ENCODE measurements at regions of chr6 and their contacts with region 1.

Region 1: GRCh38 chr6:19851241-19852089 is 14.3 kb downstream of the ID4 start:
- DNase-seq: peak; percentile 87
- ATAC-seq: peak; percentile 98
- H3K4me3 ChIP-seq: peak overlapping the region; percentile 27 to 65 (median 52)
- H3K27ac ChIP-seq: no peak overlapping the region
- H3K4me1 ChIP-seq: peaks cover 23% of the 10 kb centered on the region
- H3K27me3 ChIP-seq: peaks cover 2 to 14% of the 10 kb centered on the region in 2 experiments; a peak in 2 of 5 replicates
- CTCF ChIP-seq: peak; percentile 93
- EP300 ChIP-seq: no peak
- POLR2A ChIP-seq: no peak
- RAD21 ChIP-seq: peak; percentile 91

Region 2: DNA sequence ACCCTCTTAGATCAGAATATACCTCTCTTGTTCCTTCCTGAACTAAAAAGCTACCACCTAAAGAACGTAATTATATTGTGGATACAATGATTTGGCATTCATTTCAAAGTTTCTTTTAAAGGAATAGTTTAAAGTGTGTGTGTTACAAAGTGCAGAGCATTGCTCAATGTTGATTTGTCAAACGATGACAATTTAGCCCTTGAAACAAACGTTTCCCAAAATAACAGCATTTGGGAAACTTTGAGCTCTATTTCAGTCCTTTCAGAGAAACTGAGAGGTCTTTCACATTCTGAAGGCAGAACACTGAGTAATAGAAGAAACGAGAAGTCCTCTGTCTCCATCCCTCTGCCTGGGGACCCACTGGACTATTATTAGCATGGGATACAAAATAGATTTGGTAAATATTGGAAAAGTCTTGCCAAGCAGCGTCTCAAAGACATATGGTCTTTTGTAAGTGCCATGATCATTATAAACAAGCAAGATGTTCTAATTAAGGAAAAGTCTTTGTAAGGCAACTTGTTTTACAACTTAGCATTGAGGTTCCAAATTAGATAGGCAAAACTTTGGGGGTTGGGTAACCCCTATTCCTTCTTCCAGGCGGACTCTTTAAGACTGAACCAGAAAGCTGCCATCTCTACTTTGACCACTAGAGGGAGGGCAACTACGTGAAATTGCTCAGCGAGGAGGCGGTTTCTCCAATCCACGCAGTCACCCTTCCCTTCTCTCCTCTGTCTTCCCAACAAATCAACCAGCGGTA is 1255.5 kb before region 1 on chr6:
- CTCF ChIA-PET with region 1: no interaction called
- POLR2A ChIA-PET with region 1: no interaction called
- in situ Hi-C with region 1: loop called (anchors 25 kb)
- intact Hi-C with region 1: loop called (anchors 5 kb)
- DNase-seq: peak; percentile 43
- ATAC-seq: peak; percentile 96
- H3K4me3 ChIP-seq: no peak overlapping the region
- H3K27ac ChIP-seq: no peak overlapping the region
- H3K4me1 ChIP-seq: 0 out of 2 replicates have a peak, but pooled peaks cover 5% of the 10 kb centered on the region
- H3K27me3 ChIP-seq: no peaks in the 10 kb centered on the region
- CTCF ChIP-seq: peak; percentile 88
- EP300 ChIP-seq: no peak
- POLR2A ChIP-seq: no peak
- RAD21 ChIP-seq: peak; percentile 45; the same call in 1 of the 2 replicates

Region 3: GRCh38 chr6:19210849-19211590 is 640.4 kb before region 1 on chr6:
- CTCF ChIA-PET with region 1: no interaction called
- POLR2A ChIA-PET with region 1: no interaction called
- in situ Hi-C with region 1: no loop called
- intact Hi-C with region 1: loop called (anchors 5 kb)
- DNase-seq: peak; percentile 20
- ATAC-seq: peak; percentile 73
- H3K4me3 ChIP-seq: no peak overlapping the region
- H3K27ac ChIP-seq: no peak overlapping the region
- H3K4me1 ChIP-seq: no peaks in the 10 kb centered on the region
- H3K27me3 ChIP-seq: no peaks in the 10 kb centered on the region
- CTCF ChIP-seq: peak; percentile 36
- EP300 ChIP-seq: no peak
- POLR2A ChIP-seq: no peak
- RAD21 ChIP-seq: no peak

Region 4: DNA sequence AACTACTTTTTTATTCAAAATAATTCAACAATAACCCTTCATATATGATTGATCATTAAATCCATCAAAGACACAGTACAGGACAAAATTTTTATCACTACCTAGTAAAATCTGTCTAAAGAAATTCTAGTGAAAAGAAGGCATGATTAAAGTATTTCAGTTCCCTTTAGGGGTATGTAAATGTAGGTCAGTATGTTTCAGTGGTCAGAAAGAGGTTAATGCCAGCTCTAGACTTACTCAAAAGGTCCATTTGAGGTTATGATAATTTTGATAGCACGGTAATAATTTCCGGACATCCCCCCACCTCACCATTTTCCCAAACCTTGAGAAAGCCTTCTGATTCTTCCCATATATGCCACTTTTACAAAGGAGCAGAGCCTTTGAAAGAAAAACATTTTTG is 207.8 kb before region 1 on chr6:
- CTCF ChIA-PET with region 1: no interaction called
- POLR2A ChIA-PET with region 1: no interaction called
- in situ Hi-C with region 1: no loop called
- intact Hi-C with region 1: loop called (anchors 10 kb)
- DNase-seq: no peak
- ATAC-seq: no peak
- H3K4me3 ChIP-seq: no peak overlapping the region
- H3K27ac ChIP-seq: no peak overlapping the region
- H3K4me1 ChIP-seq: no peaks in the 10 kb centered on the region
- H3K27me3 ChIP-seq: no peaks in the 10 kb centered on the region
- CTCF ChIP-seq: no peak
- EP300 ChIP-seq: no peak
- POLR2A ChIP-seq: no peak
- RAD21 ChIP-seq: no peak

Region 5: GRCh38 chr6:19804205-19805123 is 47.0 kb before region 1 on chr6:
- CTCF ChIA-PET with region 1: no interaction called
- POLR2A ChIA-PET with region 1: no interaction called
- in situ Hi-C with region 1: no loop called
- intact Hi-C with region 1: loop called (anchors 2 kb)
- DNase-seq: peak; percentile 95
- ATAC-seq: peak; percentile 98
- H3K4me3 ChIP-seq: peak overlapping the region; percentile 62 to 82 (median 77)
- H3K27ac ChIP-seq: peak overlapping the region; percentile 84
- H3K4me1 ChIP-seq: peaks cover 34% of the 10 kb centered on the region
- H3K27me3 ChIP-seq: no peaks in the 10 kb centered on the region
- CTCF ChIP-seq: 0 out of 2 replicates have a peak, but pooled peaks have one; percentile 13
- EP300 ChIP-seq: peak; percentile 91 to 99
- POLR2A ChIP-seq: peak; percentile 76 to 80
- RAD21 ChIP-seq: peak; percentile 78

Measured in HepG2 (cell line).